ENCODE measurements at regions of chr9 and their contacts with region 1.

Region 1: GRCh38 chr9:122159026-122159924 is at the starts of genes MORN5 and NDUFA8:
- DNase-seq: peak; percentile 99
- CTCF ChIP-seq: no peak

Region 2: GRCh38 chr9:122144836-122145591 is 14.3 kb before region 1 on chr9:
- CTCF ChIA-PET with region 1: interaction called, 16 read pairs
- POLR2A ChIA-PET with region 1: no interaction called
- DNase-seq: no peak
- CTCF ChIP-seq: peak; percentile 38

Region 3: GRCh38 chr9:122197426-122197825 is 38.2 kb after region 1 on chr9:
- CTCF ChIA-PET with region 1: no interaction called
- POLR2A ChIA-PET with region 1: no interaction called
- DNase-seq: no peak
- CTCF ChIP-seq: no peak

Measured in GM10248 (cell line).